Panc1 (cell line): ENCODE measurements at regions of chr1 and their contacts with region 1.

Region 1: DNA sequence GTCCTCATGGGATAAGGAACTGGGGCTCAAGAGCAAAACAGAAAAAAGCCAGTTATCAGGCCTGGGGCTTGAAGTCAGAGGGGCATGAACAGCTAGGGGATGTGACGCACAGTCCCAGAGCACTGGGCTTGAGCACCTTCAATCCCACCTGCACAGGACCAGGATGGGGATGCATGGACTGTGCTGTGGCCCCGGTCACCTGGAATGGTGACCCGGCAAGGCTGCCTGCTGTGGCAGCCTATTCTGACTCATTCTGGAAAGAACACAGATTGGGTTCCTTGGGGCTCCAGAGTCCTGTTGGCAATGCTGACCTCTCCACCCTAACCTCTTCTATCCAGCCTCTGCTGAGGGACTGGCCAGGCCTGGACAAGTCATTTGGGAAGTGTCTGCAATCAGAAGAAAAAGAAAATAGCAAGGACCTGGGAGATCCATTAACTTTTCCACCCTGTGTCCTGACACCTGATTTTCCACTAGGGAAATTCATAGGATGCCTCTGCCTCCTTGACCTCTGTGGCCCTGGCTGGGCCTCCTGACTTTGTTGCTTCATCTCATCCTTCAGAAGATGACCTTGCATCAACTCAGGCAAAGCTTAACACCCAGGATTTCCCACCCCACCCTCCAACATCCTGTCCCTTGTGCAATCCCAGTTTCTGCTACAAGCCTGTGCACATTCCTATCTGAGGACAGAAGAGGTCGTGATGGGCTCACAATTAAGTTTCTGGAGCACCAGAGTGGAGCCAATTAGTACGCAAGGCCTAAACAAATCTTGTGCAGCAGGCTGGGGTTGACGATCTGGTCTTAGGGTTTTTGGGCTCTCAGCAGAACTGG is 17.9 kb upstream of the FMOD start:
- DNase-seq: no peak
- ATAC-seq: no peak
- H3K4me3 ChIP-seq: no peak overlapping the region
- H3K27ac ChIP-seq: no peak overlapping the region
- H3K4me1 ChIP-seq: no peaks in the 10 kb centered on the region
- H3K27me3 ChIP-seq: peaks cover 6% of the 10 kb centered on the region; the same call in 1 of the 2 replicates
- CTCF ChIP-seq: no peak

Region 2: GRCh38 chr1:203351037-203352013 is 17.5 kb before region 1 on chr1 and contains the start of gene FMOD:
- CTCF ChIA-PET with region 1: no interaction called
- POLR2A ChIA-PET with region 1: interaction called, 14 read pairs
- in situ Hi-C with region 1: no loop called
- intact Hi-C with region 1: no loop called
- DNase-seq: no peak
- ATAC-seq: peak; percentile 66; the same call in 1 of the 2 replicates
- H3K4me3 ChIP-seq: no peak within 1 kb of the TSS
- H3K27ac ChIP-seq: no peak within 1 kb of the TSS
- H3K4me1 ChIP-seq: no peaks in the 10 kb centered on the region
- H3K27me3 ChIP-seq: peaks cover 28% of the 10 kb centered on the region
- CTCF ChIP-seq: peak; percentile 23
- total RNA-seq, gene FMOD: not detected